ENCODE measurements at regions of chr6 and their contacts with region 1.

Region 1: GRCh38 chr6:53956068-53956711 is 155.1 kb upstream of the MLIP start:
- DNase-seq: peak; percentile 78 to 90
- H3K4me3 ChIP-seq: no peak overlapping the region
- H3K27ac ChIP-seq: peak overlapping the region in 2 of 3 donors; percentile 22 to 25
- H3K4me1 ChIP-seq: peaks cover 6 to 25% of the 10 kb centered on the region in 2 donors
- H3K27me3 ChIP-seq: no peaks in the 10 kb centered on the region
- CTCF ChIP-seq: peak; percentile 31 to 90 (median 84)
- POLR2A ChIP-seq: no peak

Region 2: DNA sequence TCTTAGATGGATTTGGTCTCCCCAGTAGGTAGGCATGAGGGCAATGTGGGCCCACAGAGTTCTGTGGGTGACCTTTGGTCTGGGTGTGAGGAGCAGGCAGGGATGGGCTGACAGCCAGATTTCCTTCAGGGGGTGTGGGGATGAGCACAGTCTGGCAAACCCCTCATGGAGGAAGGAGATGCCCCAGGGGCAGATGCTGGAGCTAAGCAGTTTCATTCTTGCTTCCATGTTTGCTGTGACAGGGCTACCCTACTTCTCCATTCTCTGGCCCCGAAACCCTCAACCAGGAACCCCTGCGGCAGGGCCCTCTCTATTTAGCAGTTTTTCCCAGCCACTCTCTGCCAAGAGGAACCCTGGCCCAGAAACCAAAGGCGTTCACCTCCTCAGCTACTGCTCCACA is 451.7 kb before region 1 on chr6:
- intact Hi-C with region 1: loop called (anchors 10 kb)
- DNase-seq: no peak
- H3K4me3 ChIP-seq: no peak overlapping the region
- H3K27ac ChIP-seq: no peak overlapping the region
- H3K4me1 ChIP-seq: no peaks in the 10 kb centered on the region
- H3K27me3 ChIP-seq: no peaks in the 10 kb centered on the region
- CTCF ChIP-seq: no peak
- POLR2A ChIP-seq: no peak

Region 3: GRCh38 chr6:53725791-53726431 is 230.3 kb before region 1 on chr6:
- intact Hi-C with region 1: loop called (anchors 10 kb)
- DNase-seq: peak; percentile 77 to 85
- H3K4me3 ChIP-seq: no peak overlapping the region
- H3K27ac ChIP-seq: no peak overlapping the region
- H3K4me1 ChIP-seq: peaks cover 10 to 32% of the 10 kb centered on the region in 2 donors
- H3K27me3 ChIP-seq: no peaks in the 10 kb centered on the region
- CTCF ChIP-seq: peak; percentile 91 to 97 (median 94)
- POLR2A ChIP-seq: no peak

Measured in thyroid gland (tissue), 4 donors.